ENCODE measurements at regions of chrX and their contacts with region 1.

Region 1: GRCh38 chrX:69285881-69286564 is 120.8 kb upstream of the PJA1 start:
- DNase-seq: peak; percentile 10 to 67 (median 48)
- ATAC-seq: peak; percentile 76
- H3K4me3 ChIP-seq: no peak overlapping the region
- H3K4me3 Mint-ChIP-seq: peak overlapping the region in 7 of 10 donors; percentile 12 to 53 (median 38)
- H3K27ac ChIP-seq: no peak overlapping the region
- H3K27ac Mint-ChIP-seq: no peak overlapping the region
- H3K4me1 ChIP-seq: no peaks in the 10 kb centered on the region
- H3K4me1 Mint-ChIP-seq: no peaks in the 10 kb centered on the region
- H3K27me3 ChIP-seq: no peaks in the 10 kb centered on the region
- H3K27me3 Mint-ChIP-seq: no peaks in the 10 kb centered on the region

Region 2: GRCh38 chrX:69093960-69094871 is 191.8 kb before region 1 on chrX:
- CTCF ChIA-PET with region 1: no interaction called
- POLR2A ChIA-PET with region 1: no interaction called
- intact Hi-C with region 1: loop called in 1 of 2 experiments (anchors 5 kb)
- DNase-seq: peak in 7 of 9 donors; percentile 5 to 37 (median 24)
- ATAC-seq: no peak
- H3K4me3 ChIP-seq: no peak overlapping the region
- H3K4me3 Mint-ChIP-seq: no peak overlapping the region
- H3K27ac ChIP-seq: no peak overlapping the region
- H3K27ac Mint-ChIP-seq: no peak overlapping the region
- H3K4me1 ChIP-seq: no peaks in the 10 kb centered on the region
- H3K4me1 Mint-ChIP-seq: no peaks in the 10 kb centered on the region
- H3K27me3 ChIP-seq: no peaks in the 10 kb centered on the region
- H3K27me3 Mint-ChIP-seq: no peaks in the 10 kb centered on the region

Region 3: DNA sequence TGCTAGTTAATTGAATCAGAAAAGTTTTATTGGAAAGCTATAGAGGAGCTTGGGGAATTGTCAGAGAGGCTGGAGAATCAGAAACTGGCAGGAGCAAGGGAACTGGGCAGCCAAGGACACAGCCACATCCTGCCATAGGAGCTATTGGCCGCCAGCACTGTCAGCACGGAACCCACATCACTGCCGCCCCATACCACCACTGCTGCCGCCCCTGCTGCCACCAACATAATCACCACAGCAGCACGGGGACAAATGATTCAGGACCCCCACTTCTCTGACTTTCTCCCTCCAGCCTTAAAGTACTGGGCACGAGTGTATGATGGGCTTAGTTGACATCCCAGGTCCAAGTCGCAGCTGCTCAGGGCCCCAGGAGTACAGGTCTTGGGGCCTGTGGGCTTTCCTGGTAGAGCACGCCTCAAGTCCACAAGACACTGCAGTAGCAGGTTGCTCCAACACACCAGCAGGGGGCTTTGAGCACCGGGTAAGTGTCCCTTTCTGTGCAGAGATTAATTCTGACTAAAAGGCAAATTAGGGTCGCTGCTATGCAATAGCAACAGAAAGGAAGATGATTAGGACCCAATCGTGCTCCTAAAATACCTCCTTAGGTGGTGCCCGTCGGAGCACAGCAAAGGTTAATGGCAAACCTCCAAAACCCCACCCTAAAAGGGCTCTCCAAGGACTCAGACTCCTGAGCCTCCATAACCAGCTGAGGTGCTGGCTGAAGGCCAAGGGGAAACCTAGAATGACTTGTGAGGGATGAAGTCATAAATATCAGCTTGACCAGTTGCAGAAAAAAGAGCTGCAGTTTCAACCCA is 127.7 kb before region 1 on chrX:
- CTCF ChIA-PET with region 1: no interaction called
- POLR2A ChIA-PET with region 1: no interaction called
- intact Hi-C with region 1: loop called (anchors 2 to 10 kb)
- DNase-seq: peak in 5 of 9 donors; percentile 23 to 43 (median 31)
- ATAC-seq: peak; percentile 65
- H3K4me3 ChIP-seq: no peak overlapping the region
- H3K4me3 Mint-ChIP-seq: no peak overlapping the region
- H3K27ac ChIP-seq: no peak overlapping the region
- H3K27ac Mint-ChIP-seq: peak overlapping the region in 1 of 9 donors; percentile 76
- H3K4me1 ChIP-seq: peaks cover 0 to 7% of the 10 kb centered on the region in 2 donors
- H3K4me1 Mint-ChIP-seq: peaks cover 8 to 26% (median 21%) of the 10 kb centered on the region in 7 donors
- H3K27me3 ChIP-seq: no peaks in the 10 kb centered on the region
- H3K27me3 Mint-ChIP-seq: no peaks in the 10 kb centered on the region

Region 4: GRCh38 chrX:69165087-69165651 is 120.9 kb before region 1 on chrX and contains the start of gene PJA1:
- CTCF ChIA-PET with region 1: no interaction called
- POLR2A ChIA-PET with region 1: no interaction called
- intact Hi-C with region 1: loop called in 1 of 2 experiments (anchors 10 kb)
- DNase-seq: peak; percentile 41 to 74 (median 70)
- ATAC-seq: peak; percentile 86
- H3K4me3 ChIP-seq: peak within 1 kb of the TSS; percentile 68
- H3K4me3 Mint-ChIP-seq: peak within 1 kb of the TSS; percentile 69 to 90 (median 85)
- H3K27ac ChIP-seq: peak within 1 kb of the TSS; percentile 81
- H3K27ac Mint-ChIP-seq: peak within 1 kb of the TSS; percentile 80 to 94 (median 92)
- H3K4me1 ChIP-seq: peaks cover 13 to 15% of the 10 kb centered on the region in 2 donors
- H3K4me1 Mint-ChIP-seq: peaks cover 20 to 37% (median 29%) of the 10 kb centered on the region in 7 donors
- H3K27me3 ChIP-seq: no peaks in the 10 kb centered on the region
- H3K27me3 Mint-ChIP-seq: peaks cover 0 to 12% (median 0%) of the 10 kb centered on the region in 5 donors
- total RNA-seq, gene PJA1: 14.4 to 27.0 (median 22.5) TPM

Measured in naive thymus-derived CD4-positive, alpha-beta T cell (primary cell).